K562 (cell line): ENCODE measurements at regions of chr20 and their contacts with region 1.

Region 1: GRCh38 chr20:4607287-4607713 is 114.4 kb upstream of the PRND start:
- DNase-seq: peak; percentile 54 to 65 (median 62)
- ATAC-seq: peak; percentile 90
- H3K4me3 ChIP-seq: no peak overlapping the region
- H3K27ac ChIP-seq: no peak overlapping the region
- H3K4me1 ChIP-seq: no peaks in the 10 kb centered on the region; a peak in 1 of 5 replicates
- H3K27me3 ChIP-seq: peaks cover 4 to 15% of the 10 kb centered on the region in 2 experiments; a peak in 3 of 5 replicates
- CTCF ChIP-seq: peak; percentile 72 to 83 (median 82)
- EP300 ChIP-seq: no peak
- POLR2A ChIP-seq: no peak
- RAD21 ChIP-seq: peak; percentile 86 to 93

Region 2: GRCh38 chr20:4720041-4720976 is 113.0 kb after region 1 on chr20:
- CTCF ChIA-PET with region 1: interaction called, 51 read pairs
- POLR2A ChIA-PET with region 1: interaction called, 5 read pairs
- in situ Hi-C with region 1: loop called (anchors 5 kb)
- intact Hi-C with region 1: loop called (anchors 1 kb)
- DNase-seq: peak; percentile 63 to 76 (median 65)
- ATAC-seq: peak; percentile 89
- H3K4me3 ChIP-seq: no peak overlapping the region
- H3K27ac ChIP-seq: no peak overlapping the region
- H3K4me1 ChIP-seq: no peaks in the 10 kb centered on the region
- H3K27me3 ChIP-seq: peaks cover 4 to 37% of the 10 kb centered on the region in 2 experiments; a peak in 3 of 5 replicates
- CTCF ChIP-seq: peak; percentile 70 to 84 (median 83)
- EP300 ChIP-seq: no peak
- POLR2A ChIP-seq: no peak
- RAD21 ChIP-seq: peak; percentile 87 to 93

Region 3: DNA sequence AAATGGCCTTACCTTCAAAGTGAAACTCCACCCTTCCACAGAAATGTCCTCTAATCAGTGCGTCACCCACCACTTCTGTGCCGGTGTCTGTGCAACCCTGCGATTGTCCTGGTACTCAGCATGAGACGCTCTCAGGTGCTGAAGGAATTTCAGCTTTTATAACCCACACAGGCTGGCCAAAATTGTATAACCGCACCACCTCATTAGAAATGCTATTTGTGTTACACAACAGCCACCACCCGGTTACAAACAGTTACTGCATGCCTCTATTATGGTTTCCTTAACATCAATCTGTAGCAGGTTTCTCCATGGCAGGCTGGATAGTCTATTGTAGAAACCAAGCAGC is 342.5 kb after region 1 on chr20:
- CTCF ChIA-PET with region 1: interaction called, 5 read pairs
- POLR2A ChIA-PET with region 1: no interaction called
- in situ Hi-C with region 1: loop called (anchors 10 kb)
- intact Hi-C with region 1: loop called (anchors 10 kb)
- DNase-seq: peak in 2 of 4 experiments; percentile 8 to 12
- ATAC-seq: peak; percentile 41; the same call in 1 of the 3 replicates
- H3K4me3 ChIP-seq: no peak overlapping the region
- H3K27ac ChIP-seq: no peak overlapping the region
- H3K4me1 ChIP-seq: no peaks in the 10 kb centered on the region
- H3K27me3 ChIP-seq: no peaks in the 10 kb centered on the region
- CTCF ChIP-seq: peak; percentile 29 to 45 (median 33); a peak in 3 of 6 replicates
- EP300 ChIP-seq: no peak
- POLR2A ChIP-seq: no peak
- RAD21 ChIP-seq: peak in 1 of 2 experiments; percentile 50; a peak in 3 of 4 replicates

Region 4: GRCh38 chr20:4956200-4956810 is 349.0 kb after region 1 on chr20:
- CTCF ChIA-PET with region 1: interaction called, 3 read pairs
- POLR2A ChIA-PET with region 1: no interaction called
- in situ Hi-C with region 1: no loop called
- intact Hi-C with region 1: loop called (anchors 10 kb)
- DNase-seq: peak; percentile 32 to 56 (median 41)
- ATAC-seq: peak; percentile 66; the same call in 2 of the 3 replicates
- H3K4me3 ChIP-seq: no peak overlapping the region
- H3K27ac ChIP-seq: no peak overlapping the region
- H3K4me1 ChIP-seq: no peaks in the 10 kb centered on the region
- H3K27me3 ChIP-seq: no peaks in the 10 kb centered on the region
- CTCF ChIP-seq: peak; percentile 43 to 74 (median 60); a peak in 4 of 6 replicates
- EP300 ChIP-seq: no peak
- POLR2A ChIP-seq: no peak
- RAD21 ChIP-seq: peak; percentile 65 to 77

Region 5: DNA sequence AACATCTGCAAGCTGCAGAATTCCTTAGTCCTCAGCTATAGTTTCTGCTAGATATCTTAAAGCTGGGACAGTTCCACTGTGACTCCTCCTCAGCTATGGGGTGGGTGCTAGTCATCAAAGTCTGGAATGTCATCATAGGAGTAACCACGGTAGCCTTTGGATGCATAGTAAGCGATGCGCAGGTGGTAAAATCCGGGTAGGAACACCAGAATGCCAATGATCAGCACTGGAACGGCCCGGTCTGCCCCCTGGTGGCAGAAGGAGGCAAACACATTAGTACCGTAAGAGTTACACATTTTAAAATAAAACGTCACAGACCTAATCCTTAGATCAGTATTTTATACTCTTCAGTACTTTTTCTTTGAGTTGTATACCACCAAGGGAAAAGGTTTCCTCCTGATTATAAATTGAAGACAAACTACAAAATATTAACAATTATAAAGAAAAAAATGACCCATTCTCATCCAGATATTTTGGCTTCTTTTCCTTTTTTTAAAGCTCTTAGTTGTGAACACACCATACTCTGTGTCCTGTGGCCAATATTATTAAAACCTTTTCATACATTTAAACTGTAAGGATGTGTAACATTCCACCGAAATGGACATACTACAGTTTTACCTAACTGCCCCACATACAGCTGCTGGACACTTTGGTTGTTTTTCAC is 493.5 kb after region 1 on chr20:
- CTCF ChIA-PET with region 1: interaction called, 3 read pairs
- POLR2A ChIA-PET with region 1: no interaction called
- in situ Hi-C with region 1: no loop called
- intact Hi-C with region 1: loop called (anchors 2 kb)
- DNase-seq: peak; percentile 45 to 63 (median 55)
- ATAC-seq: peak; percentile 88
- H3K4me3 ChIP-seq: no peak overlapping the region
- H3K27ac ChIP-seq: no peak overlapping the region
- H3K4me1 ChIP-seq: no peaks in the 10 kb centered on the region
- H3K27me3 ChIP-seq: no peaks in the 10 kb centered on the region
- CTCF ChIP-seq: peak; percentile 65 to 72 (median 66)
- EP300 ChIP-seq: no peak
- POLR2A ChIP-seq: no peak
- RAD21 ChIP-seq: peak; percentile 70

Region 6: DNA sequence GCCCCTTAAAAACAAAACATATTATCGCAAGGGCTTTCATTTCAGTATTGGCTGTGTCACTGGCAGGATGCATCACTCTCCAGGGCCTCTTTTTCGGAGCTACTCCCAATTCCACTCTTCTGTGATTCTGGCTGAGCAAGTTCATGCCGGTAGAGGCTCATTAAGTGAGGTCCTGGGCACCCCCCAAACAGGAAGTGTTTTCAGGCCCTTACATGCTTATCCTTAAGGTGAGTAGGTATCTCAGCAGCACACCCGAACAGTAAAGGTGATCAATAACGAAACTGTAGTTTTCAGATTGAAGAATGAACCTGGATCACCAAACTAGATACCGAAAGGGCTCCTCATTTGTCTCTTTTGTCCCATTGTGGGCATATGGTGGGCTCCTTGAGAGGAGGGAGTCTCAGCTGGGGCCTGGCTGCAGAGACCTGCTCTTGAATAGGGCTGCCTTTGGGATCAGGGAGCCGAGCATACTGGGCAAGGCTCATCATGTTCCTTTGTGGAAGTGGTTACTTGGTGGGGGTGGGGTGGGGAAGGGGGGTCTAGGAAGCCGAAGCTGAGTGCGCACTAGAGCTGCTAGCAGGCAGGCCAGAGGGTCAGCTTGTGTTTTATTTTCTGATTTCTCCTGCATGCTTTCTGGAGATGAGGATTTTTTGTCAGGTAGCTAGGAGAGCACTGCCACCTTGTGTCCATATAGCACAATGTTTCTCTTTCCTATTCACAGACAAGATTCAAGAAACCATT is 584.7 kb after region 1 on chr20:
- CTCF ChIA-PET with region 1: no interaction called
- POLR2A ChIA-PET with region 1: no interaction called
- in situ Hi-C with region 1: no loop called
- intact Hi-C with region 1: loop called (anchors 10 kb)
- DNase-seq: peak; percentile 54 to 63 (median 57)
- ATAC-seq: peak; percentile 83
- H3K4me3 ChIP-seq: no peak overlapping the region
- H3K27ac ChIP-seq: no peak overlapping the region
- H3K4me1 ChIP-seq: no peaks in the 10 kb centered on the region
- H3K27me3 ChIP-seq: no peaks in the 10 kb centered on the region
- CTCF ChIP-seq: peak; percentile 50 to 82 (median 64); a peak in 5 of 6 replicates
- EP300 ChIP-seq: no peak
- POLR2A ChIP-seq: no peak
- RAD21 ChIP-seq: peak; percentile 86 to 91